IMR-90 (cell line): ENCODE measurements at regions of chr9 and their contacts with region 1.

Region 1: DNA sequence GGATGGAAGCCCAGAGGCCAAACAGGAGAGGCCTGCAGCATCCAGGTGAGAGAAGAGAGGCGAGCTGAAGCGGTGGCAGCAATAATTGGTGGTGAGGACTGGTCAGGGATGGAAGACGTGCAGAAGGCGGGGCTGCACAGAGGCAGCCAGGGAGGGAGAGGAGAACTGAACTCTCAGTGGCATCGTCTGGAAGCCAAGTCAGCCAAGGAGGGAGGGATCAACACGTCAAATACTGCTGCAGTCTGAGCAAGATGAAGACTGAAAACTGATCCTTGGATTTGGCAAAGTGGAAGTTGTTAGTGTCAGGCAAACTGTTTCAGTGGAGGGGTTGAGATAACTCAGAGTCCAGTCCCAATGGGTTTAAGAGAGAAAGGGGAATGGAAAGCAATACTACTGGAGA is 145.4 kb downstream of the CDK5RAP2 start:
- DNase-seq: peak; percentile 93
- ATAC-seq: peak; percentile 85
- H3K4me3 ChIP-seq: no peak overlapping the region
- H3K27ac ChIP-seq: peak overlapping the region; percentile 94
- H3K4me1 ChIP-seq: peaks cover 21% of the 10 kb centered on the region
- H3K27me3 ChIP-seq: no peaks in the 10 kb centered on the region
- CTCF ChIP-seq: no peak
- POLR2A ChIP-seq: no peak
- RAD21 ChIP-seq: no peak

Region 2: GRCh38 chr9:120366646-120367019 is 67.9 kb before region 1 on chr9:
- CTCF ChIA-PET with region 1: no interaction called
- POLR2A ChIA-PET with region 1: no interaction called
- dilution Hi-C with region 1: no loop called
- in situ Hi-C with region 1: no loop called
- intact Hi-C with region 1: loop called (anchors 2 kb)
- DNase-seq: peak; percentile 91
- ATAC-seq: peak; percentile 90
- H3K4me3 ChIP-seq: no peak overlapping the region
- H3K27ac ChIP-seq: no peak overlapping the region
- H3K4me1 ChIP-seq: peaks cover 5% of the 10 kb centered on the region
- H3K27me3 ChIP-seq: no peaks in the 10 kb centered on the region; the same call in 1 of the 2 replicates
- CTCF ChIP-seq: peak; percentile 61
- POLR2A ChIP-seq: no peak
- RAD21 ChIP-seq: peak; percentile 55

Region 3: GRCh38 chr9:120394058-120394669 is 40.4 kb before region 1 on chr9:
- CTCF ChIA-PET with region 1: no interaction called
- POLR2A ChIA-PET with region 1: no interaction called
- dilution Hi-C with region 1: no loop called
- in situ Hi-C with region 1: no loop called
- intact Hi-C with region 1: loop called (anchors 5 kb)
- DNase-seq: peak; percentile 96
- ATAC-seq: peak; percentile 88
- H3K4me3 ChIP-seq: no peak overlapping the region
- H3K27ac ChIP-seq: peak overlapping the region; percentile 66
- H3K4me1 ChIP-seq: peaks cover 29% of the 10 kb centered on the region
- H3K27me3 ChIP-seq: no peaks in the 10 kb centered on the region
- CTCF ChIP-seq: peak; percentile 12; the same call in 1 of the 2 replicates
- POLR2A ChIP-seq: no peak
- RAD21 ChIP-seq: no peak; the same call in 1 of the 2 replicates